CD8-positive, alpha-beta T cell (primary cell): ENCODE measurements at regions of chr1 and their contacts with region 1.

Region 1: GRCh38 chr1:23539698-23540266 is 8.7 kb upstream of the E2F2 start:
- DNase-seq: peak; percentile 82 to 95 (median 92)
- ATAC-seq: peak; percentile 96
- H3K4me3 ChIP-seq: no peak overlapping the region
- H3K4me3 Mint-ChIP-seq: peak overlapping the region; percentile 23
- H3K27ac ChIP-seq: no peak overlapping the region
- H3K27ac Mint-ChIP-seq: peak overlapping the region; percentile 74
- H3K4me1 ChIP-seq: peaks cover 3% of the 10 kb centered on the region
- H3K4me1 Mint-ChIP-seq: peaks cover 15% of the 10 kb centered on the region
- H3K27me3 ChIP-seq: no peaks in the 10 kb centered on the region
- H3K27me3 Mint-ChIP-seq: no peaks in the 10 kb centered on the region
- CTCF ChIP-seq: peak; percentile 74

Region 2: DNA sequence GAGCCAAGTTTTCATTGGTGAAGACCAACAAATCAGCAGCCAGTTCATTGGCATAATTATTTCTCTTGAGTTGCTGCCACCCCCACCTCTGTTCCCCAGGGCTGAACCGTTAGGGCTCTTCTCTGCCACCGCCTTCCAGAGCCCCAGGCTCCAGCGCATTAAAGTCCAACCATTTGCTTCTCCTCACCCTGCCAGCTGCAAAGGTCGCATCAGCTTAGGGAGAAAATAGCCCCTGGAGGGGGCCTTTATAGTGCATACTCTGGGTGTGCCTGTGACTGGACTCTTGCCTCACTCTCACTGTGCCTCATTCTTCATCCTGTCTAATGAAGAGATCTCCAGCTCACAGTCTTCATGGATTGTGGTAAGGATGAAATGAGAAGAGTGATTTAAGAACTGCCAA is 470.1 kb before region 1 on chr1:
- CTCF ChIA-PET with region 1: no interaction called
- POLR2A ChIA-PET with region 1: no interaction called
- intact Hi-C with region 1: no loop called
- DNase-seq: no peak
- ATAC-seq: no peak
- H3K4me3 ChIP-seq: no peak overlapping the region
- H3K4me3 Mint-ChIP-seq: no peak overlapping the region
- H3K27ac ChIP-seq: no peak overlapping the region
- H3K27ac Mint-ChIP-seq: no peak overlapping the region
- H3K4me1 ChIP-seq: no peaks in the 10 kb centered on the region
- H3K4me1 Mint-ChIP-seq: no peaks in the 10 kb centered on the region
- H3K27me3 ChIP-seq: no peaks in the 10 kb centered on the region
- H3K27me3 Mint-ChIP-seq: no peaks in the 10 kb centered on the region
- CTCF ChIP-seq: no peak

Region 3: GRCh38 chr1:23322770-23323169 is 217.0 kb before region 1 on chr1:
- CTCF ChIA-PET with region 1: no interaction called
- POLR2A ChIA-PET with region 1: no interaction called
- intact Hi-C with region 1: loop called in 1 of 2 experiments (anchors 5 kb)
- DNase-seq: no peak
- ATAC-seq: no peak
- H3K4me3 ChIP-seq: no peak overlapping the region
- H3K4me3 Mint-ChIP-seq: no peak overlapping the region
- H3K27ac ChIP-seq: no peak overlapping the region
- H3K27ac Mint-ChIP-seq: peak overlapping the region; percentile 34
- H3K4me1 ChIP-seq: no peaks in the 10 kb centered on the region
- H3K4me1 Mint-ChIP-seq: peaks cover 30% of the 10 kb centered on the region
- H3K27me3 ChIP-seq: no peaks in the 10 kb centered on the region
- H3K27me3 Mint-ChIP-seq: no peaks in the 10 kb centered on the region
- CTCF ChIP-seq: no peak

Region 4: DNA sequence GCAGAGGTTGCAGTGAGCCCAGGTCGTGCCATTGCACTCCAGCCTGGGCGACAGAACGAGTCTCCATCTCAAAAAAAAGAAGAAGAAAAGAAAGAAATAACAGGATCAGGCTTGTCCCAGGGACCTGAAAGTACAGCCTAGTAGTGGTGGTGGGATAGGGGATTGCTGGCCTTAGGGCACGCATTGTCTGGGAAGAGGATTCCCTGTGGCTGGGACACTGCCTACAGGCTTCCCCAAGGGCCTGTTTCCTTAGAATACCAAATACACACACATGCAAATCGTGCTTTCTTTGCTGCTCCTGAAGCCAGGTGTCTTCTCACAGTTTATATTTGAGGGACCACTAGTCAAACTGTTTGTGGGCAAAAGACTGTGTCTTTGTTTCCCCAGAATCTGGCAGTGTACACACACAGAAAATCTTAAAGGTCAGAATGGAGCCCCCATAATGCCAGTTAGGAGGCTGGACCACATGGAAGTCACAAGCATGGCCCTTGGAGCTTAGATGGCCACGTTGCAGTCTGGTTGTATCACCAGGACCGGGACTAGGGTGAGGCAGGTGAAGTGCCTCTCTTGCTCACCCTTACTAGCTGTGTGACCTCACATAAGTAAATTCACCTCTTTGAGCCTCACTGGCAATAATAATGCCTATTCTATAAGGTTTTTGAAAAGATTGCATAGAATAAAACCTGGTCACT is 43.1 kb before region 1 on chr1:
- CTCF ChIA-PET with region 1: interaction called, 353 read pairs
- POLR2A ChIA-PET with region 1: interaction called, 22 read pairs
- intact Hi-C with region 1: loop called (anchors 1 kb)
- DNase-seq: no peak
- ATAC-seq: peak; percentile 23
- H3K4me3 ChIP-seq: no peak overlapping the region
- H3K4me3 Mint-ChIP-seq: no peak overlapping the region
- H3K27ac ChIP-seq: no peak overlapping the region
- H3K27ac Mint-ChIP-seq: no peak overlapping the region
- H3K4me1 ChIP-seq: no peaks in the 10 kb centered on the region
- H3K4me1 Mint-ChIP-seq: no peaks in the 10 kb centered on the region
- H3K27me3 ChIP-seq: no peaks in the 10 kb centered on the region
- H3K27me3 Mint-ChIP-seq: peaks cover 4% of the 10 kb centered on the region
- CTCF ChIP-seq: no peak

Region 5: DNA sequence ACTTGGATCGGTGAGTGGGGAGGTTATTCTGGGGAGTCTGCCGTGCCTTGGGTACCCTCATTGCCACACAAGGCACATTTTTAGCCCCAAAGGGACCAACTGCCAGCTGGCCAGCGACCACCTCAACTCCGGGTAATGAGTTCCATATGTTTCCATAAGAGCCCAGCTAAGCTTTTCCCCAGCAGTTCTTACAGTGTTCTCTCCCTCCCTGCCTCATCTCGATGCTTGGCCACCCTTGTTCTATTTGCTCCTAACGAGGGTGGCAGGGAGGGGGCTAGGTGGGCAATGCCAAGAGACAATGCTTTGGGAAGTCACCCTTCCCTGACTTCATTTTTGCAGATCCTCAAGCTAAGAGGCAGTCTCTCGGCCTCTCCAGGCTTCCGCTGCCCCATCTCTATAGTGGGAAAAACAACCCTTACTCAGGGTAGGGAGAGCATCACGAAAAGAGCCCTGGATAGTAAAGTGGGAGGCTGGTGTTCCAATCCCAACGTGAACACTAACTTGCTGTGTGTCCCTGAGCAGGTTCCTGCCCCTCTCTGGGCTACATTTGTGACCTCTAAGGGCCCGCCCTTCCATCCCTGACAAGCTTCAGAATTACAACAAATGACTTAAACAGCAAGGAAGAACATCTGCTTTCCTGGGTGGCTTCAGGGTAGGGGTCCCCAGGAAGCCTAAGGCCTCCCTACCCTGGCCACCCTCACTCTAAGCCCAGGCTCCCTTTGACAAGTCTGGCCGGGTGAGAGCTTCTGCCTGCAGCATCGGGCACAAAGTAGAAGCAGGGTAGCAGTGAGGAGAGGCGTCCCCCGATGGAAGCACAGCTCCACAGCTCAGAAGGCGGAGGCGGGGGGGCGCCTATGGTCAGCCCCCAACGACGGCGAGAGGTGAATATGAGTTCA is 13.7 kb after region 1 on chr1:
- CTCF ChIA-PET with region 1: interaction called, 52 read pairs
- POLR2A ChIA-PET with region 1: interaction called, 21 read pairs
- intact Hi-C with region 1: loop called in 1 of 2 experiments (anchors 2 kb)
- DNase-seq: no peak
- ATAC-seq: no peak
- H3K4me3 ChIP-seq: peak overlapping the region in 1 of 2 experiments; percentile 76
- H3K4me3 Mint-ChIP-seq: peak overlapping the region; percentile 91
- H3K27ac ChIP-seq: no peak overlapping the region
- H3K27ac Mint-ChIP-seq: peak overlapping the region; percentile 92
- H3K4me1 ChIP-seq: peaks cover 36% of the 10 kb centered on the region
- H3K4me1 Mint-ChIP-seq: peaks cover 53% of the 10 kb centered on the region
- H3K27me3 ChIP-seq: no peaks in the 10 kb centered on the region
- H3K27me3 Mint-ChIP-seq: no peaks in the 10 kb centered on the region
- CTCF ChIP-seq: no peak

Region 6: GRCh38 chr1:23591460-23592208 is 51.9 kb after region 1 on chr1:
- CTCF ChIA-PET with region 1: interaction called, 24 read pairs
- POLR2A ChIA-PET with region 1: no interaction called
- intact Hi-C with region 1: no loop called
- DNase-seq: peak in 5 of 9 experiments; percentile 34 to 63 (median 46)
- ATAC-seq: peak; percentile 82
- H3K4me3 ChIP-seq: no peak overlapping the region
- H3K4me3 Mint-ChIP-seq: peak overlapping the region; percentile 42
- H3K27ac ChIP-seq: peak overlapping the region in 1 of 2 experiments; percentile 41
- H3K27ac Mint-ChIP-seq: peak overlapping the region; percentile 83
- H3K4me1 ChIP-seq: peaks cover 62% of the 10 kb centered on the region
- H3K4me1 Mint-ChIP-seq: peaks cover 64% of the 10 kb centered on the region
- H3K27me3 ChIP-seq: no peaks in the 10 kb centered on the region
- H3K27me3 Mint-ChIP-seq: no peaks in the 10 kb centered on the region
- CTCF ChIP-seq: no peak

Region 7: DNA sequence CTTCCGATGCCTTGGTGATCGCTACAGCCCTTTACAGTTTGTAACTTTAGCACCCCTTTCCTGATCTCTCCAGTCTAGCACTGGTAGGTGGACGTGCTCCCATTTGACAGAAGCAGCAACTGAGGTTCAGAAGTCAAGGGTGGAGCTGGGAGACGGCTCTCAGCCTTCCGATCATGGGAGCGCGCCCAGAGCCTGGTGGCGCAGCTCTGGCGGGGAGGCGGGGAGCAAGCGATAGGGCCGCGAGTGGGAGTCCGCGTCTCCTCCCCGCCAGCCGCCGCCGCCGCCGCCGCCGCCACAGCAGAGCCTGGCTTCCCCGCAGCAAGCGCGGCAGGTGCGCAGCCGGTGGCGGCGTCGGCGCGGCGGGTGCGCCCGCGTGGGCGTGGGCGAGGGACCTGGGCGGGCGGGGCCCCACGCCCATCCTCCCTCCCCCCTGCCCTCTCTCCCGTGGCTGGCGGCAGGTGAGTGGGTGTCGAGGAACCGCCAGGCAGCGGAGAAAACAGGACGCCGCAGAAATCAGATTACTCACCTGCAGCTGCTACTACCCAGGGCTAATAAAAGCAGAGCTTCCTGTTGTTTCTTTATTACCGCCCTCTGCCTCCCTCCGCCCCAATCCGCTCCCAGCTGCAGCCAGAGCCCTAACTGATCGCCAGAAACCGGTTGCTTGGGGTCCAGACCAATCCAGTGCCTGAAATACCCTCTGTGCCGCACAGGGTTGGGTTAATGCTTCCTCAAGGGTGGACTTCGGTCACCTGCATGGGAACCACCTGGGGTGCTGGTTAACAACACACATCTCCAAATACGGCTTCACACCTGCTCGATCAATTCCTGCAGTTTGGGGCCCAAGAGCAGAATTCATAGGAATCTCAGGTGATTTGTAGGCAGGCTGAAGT is 79.8 kb after region 1 on chr1:
- CTCF ChIA-PET with region 1: interaction called, 12 read pairs
- POLR2A ChIA-PET with region 1: interaction called, 4 read pairs
- intact Hi-C with region 1: no loop called
- DNase-seq: peak; percentile 66 to 92 (median 85)
- ATAC-seq: peak; percentile 84
- H3K4me3 ChIP-seq: peak overlapping the region; percentile 44 to 50
- H3K4me3 Mint-ChIP-seq: peak overlapping the region; percentile 72
- H3K27ac ChIP-seq: peak overlapping the region; percentile 62 to 68
- H3K27ac Mint-ChIP-seq: peak overlapping the region; percentile 95
- H3K4me1 ChIP-seq: peaks cover 80% of the 10 kb centered on the region
- H3K4me1 Mint-ChIP-seq: peaks cover 89% of the 10 kb centered on the region
- H3K27me3 ChIP-seq: no peaks in the 10 kb centered on the region
- H3K27me3 Mint-ChIP-seq: no peaks in the 10 kb centered on the region
- CTCF ChIP-seq: no peak

Region 8: DNA sequence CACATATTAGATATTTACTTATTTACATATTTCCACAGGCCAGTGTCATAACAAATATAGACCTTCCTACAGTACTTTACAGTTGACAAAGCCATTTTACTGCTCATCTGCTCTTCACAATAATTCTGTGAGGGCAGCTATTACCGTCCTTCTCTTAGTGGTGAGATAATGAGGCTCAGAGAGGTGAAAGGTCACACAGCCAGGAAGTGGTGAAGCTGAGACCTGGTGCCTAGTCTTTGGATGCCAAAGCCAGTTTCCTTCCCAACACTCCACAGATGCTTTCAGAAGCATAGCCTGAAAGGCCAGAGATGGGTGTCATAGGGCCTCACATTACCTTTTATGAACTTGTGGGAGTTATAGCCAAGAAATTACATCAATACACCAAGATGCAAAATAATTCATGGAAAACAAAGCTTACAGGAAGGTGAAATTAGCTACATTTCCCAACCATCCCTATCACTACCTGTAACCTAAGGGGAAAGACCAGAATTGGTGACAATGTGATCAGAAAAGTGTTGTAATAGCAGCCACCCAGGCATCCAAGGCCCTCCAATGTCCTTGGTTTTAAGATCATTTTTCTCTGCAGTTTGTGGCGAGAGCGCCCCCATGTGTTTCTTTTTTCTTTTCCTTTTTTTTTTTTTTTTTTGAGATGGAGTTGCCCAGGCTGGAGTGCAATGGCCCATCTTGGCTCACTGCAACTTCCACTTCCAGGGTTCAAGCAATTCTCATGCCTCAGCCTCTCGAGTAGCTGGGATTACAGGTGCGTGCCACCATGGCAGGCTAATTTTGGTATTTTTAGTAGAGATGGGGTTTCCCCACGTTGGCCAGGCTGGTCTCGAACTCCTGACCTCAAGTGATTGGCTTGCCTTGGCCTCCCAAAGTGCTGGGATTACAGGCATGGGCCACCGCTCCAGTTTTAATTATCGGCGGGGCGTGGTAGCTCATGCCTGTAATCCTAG is 125.3 kb after region 1 on chr1:
- CTCF ChIA-PET with region 1: interaction called, 3 read pairs
- POLR2A ChIA-PET with region 1: no interaction called
- intact Hi-C with region 1: loop called in 1 of 2 experiments (anchors 1 kb)
- DNase-seq: peak in 2 of 9 experiments; percentile 32 to 39
- ATAC-seq: no peak
- H3K4me3 ChIP-seq: no peak overlapping the region
- H3K4me3 Mint-ChIP-seq: no peak overlapping the region
- H3K27ac ChIP-seq: no peak overlapping the region
- H3K27ac Mint-ChIP-seq: no peak overlapping the region
- H3K4me1 ChIP-seq: no peaks in the 10 kb centered on the region
- H3K4me1 Mint-ChIP-seq: peaks cover 6% of the 10 kb centered on the region
- H3K27me3 ChIP-seq: no peaks in the 10 kb centered on the region
- H3K27me3 Mint-ChIP-seq: no peaks in the 10 kb centered on the region
- CTCF ChIP-seq: peak; percentile 29

Region 9: DNA sequence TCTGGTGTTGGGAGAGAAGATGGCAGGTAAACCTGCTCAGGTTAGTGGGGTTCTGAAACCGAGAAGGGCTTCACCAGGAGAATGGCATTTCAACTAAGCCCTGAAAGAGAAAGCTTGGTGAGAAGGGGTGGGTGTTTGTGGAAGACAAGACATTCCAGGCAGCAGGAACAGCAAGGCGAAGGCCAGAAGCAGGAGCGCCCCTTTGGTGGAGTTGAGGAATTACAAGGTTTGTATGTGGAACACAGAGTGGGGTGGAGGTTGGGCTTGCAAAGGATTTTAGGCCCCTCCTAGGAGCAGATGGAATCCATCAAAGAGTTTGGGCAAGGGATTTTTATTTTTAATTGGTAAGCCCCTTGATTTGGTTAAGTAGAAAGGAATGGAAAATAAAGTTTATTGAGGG is 178.7 kb after region 1 on chr1:
- CTCF ChIA-PET with region 1: no interaction called
- POLR2A ChIA-PET with region 1: no interaction called
- intact Hi-C with region 1: no loop called
- DNase-seq: no peak
- ATAC-seq: no peak
- H3K4me3 ChIP-seq: no peak overlapping the region
- H3K4me3 Mint-ChIP-seq: no peak overlapping the region
- H3K27ac ChIP-seq: no peak overlapping the region
- H3K27ac Mint-ChIP-seq: no peak overlapping the region
- H3K4me1 ChIP-seq: no peaks in the 10 kb centered on the region
- H3K4me1 Mint-ChIP-seq: peaks cover 7% of the 10 kb centered on the region
- H3K27me3 ChIP-seq: no peaks in the 10 kb centered on the region
- H3K27me3 Mint-ChIP-seq: no peaks in the 10 kb centered on the region
- CTCF ChIP-seq: no peak

Region 10: DNA sequence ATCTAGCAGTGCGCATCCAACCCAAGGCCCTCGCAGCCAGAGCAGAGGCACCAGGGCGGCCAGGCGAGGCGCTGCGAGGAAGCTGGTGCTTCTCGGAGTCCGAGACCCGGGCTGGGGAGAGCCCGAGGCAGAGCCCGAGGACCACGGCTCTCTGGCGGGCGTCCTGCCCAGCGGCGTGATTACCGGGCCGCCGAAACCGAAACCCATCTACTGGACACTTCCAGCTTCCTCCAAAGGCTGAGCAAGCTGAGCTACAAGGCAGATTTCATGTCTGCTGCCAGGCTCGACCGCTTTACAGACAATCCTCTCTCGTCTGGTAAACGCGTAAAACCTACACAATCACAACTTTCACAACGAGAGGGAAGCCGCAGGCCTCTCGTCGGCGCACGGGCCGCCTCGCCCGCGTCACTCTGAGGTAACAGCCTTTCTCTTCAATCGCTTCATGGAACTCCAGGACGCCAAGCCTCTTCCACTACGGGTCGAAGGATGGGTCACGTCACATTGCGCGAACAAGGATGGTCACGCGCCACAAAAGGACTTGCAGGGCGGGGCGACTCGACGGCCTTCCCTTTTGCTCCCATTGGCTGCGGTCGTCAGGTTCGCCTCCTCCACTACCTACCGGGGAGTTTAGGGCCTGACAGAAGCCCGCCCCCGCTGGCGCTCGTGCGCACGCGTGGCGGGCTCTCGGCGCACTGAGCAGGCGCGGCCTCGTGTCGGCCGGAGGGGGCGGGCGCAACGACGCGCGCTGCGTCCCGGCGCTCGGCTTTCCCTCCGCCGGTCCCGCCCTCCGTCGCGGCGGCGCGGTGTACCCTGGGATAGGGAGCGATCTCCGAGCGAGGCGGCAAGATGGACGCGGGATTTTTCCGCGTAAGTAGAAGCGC is 1102.9 kb after region 1 on chr1 and contains the start of gene SRRM1:
- CTCF ChIA-PET with region 1: no interaction called
- POLR2A ChIA-PET with region 1: no interaction called
- intact Hi-C with region 1: no loop called
- DNase-seq: peak; percentile 96 to 100 (median 98)
- ATAC-seq: peak; percentile 86
- H3K4me3 ChIP-seq: peak within 1 kb of the TSS; percentile 89 to 98
- H3K4me3 Mint-ChIP-seq: peak within 1 kb of the TSS; percentile 88
- H3K27ac ChIP-seq: peak within 1 kb of the TSS; percentile 98 to 100
- H3K27ac Mint-ChIP-seq: peak within 1 kb of the TSS; percentile 99
- H3K4me1 ChIP-seq: peaks cover 32% of the 10 kb centered on the region
- H3K4me1 Mint-ChIP-seq: peaks cover 41% of the 10 kb centered on the region
- H3K27me3 ChIP-seq: no peaks in the 10 kb centered on the region
- H3K27me3 Mint-ChIP-seq: no peaks in the 10 kb centered on the region
- CTCF ChIP-seq: no peak
- total RNA-seq, gene SRRM1: 460 to 474 TPM